Activated T-helper 2 cell treated with anti-CD3 and anti-CD28 coated beads, Interferon-gamma antibody, Interleukin-2, Interleukin-4, amounts not matched to agents 10 μg/mL and 5 μg/mL and 100 μg/mL, durations not matched to agents 14 hours and 24 hours and 36 hours (primary cell): ENCODE measurements at regions of chr5 and their contacts with region 1.

Region 1: DNA sequence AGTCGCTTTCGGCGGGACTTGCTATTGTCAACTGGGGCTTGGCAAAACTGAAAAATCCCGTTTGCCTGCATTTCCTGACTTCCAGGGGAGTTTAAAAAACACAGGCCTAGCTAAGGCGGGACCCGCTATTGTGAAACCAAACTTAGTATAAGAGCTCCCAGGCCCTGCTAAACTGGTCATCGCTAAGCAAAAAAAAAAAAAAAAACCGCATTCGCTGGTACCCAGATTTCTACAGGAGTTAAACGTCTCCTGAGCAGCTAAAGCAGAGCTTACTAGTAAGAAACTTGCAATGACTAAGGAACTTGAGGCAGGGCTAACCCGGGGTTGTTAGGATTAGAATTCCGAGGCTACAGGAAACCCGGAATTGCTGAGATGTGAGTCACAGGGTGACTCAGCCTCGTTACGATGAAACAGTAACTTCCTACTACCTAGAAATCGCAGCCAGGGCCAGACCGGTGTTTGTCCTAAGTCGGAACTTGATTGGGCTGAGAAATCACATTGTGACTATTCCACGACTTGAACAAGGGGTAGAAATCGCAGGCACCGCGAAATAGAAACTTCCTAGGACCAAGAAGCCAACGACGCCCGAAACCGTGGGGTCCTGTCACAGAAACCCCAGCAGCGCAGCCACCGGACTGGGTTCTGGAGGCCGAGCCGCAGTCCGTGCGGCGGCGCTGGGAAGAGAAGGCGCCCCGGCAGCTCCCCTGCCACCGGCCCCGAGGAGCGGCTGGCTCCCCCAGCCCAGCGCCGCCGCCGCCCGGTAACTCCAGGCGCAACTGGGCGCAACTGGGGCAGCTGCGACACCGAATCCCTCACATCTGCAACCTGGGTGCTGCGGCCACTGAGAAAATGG is 89.5 kb downstream of the ANXA2R start:
- DNase-seq: peak; percentile 61
- H3K4me3 Mint-ChIP-seq: peak overlapping the region; percentile 92
- H3K27ac Mint-ChIP-seq: peak overlapping the region; percentile 99
- H3K4me1 Mint-ChIP-seq: peaks cover 24% of the 10 kb centered on the region
- H3K27me3 Mint-ChIP-seq: peaks cover 2% of the 10 kb centered on the region

Region 2: GRCh38 chr5:42756606-42757601 is 193.8 kb before region 1 on chr5 and contains the start of gene CCDC152:
- intact Hi-C with region 1: loop called (anchors 2 kb)
- DNase-seq: peak; percentile 32
- H3K4me3 Mint-ChIP-seq: peak within 1 kb of the TSS; percentile 81
- H3K27ac Mint-ChIP-seq: peak within 1 kb of the TSS; percentile 31
- H3K4me1 Mint-ChIP-seq: peaks cover 16% of the 10 kb centered on the region
- H3K27me3 Mint-ChIP-seq: peaks cover 14% of the 10 kb centered on the region
- total RNA-seq, gene CCDC152: 5.5 and 6.0 TPM in 2 replicates

Region 3: GRCh38 chr5:42994246-42995151 is 43.8 kb after region 1 on chr5:
- intact Hi-C with region 1: loop called (anchors 1 kb)
- DNase-seq: peak; percentile 86
- H3K4me3 Mint-ChIP-seq: peak overlapping the region; percentile 100
- H3K27ac Mint-ChIP-seq: peak overlapping the region; percentile 100
- H3K4me1 Mint-ChIP-seq: peaks cover 32% of the 10 kb centered on the region
- H3K27me3 Mint-ChIP-seq: no peaks in the 10 kb centered on the region

Region 4: DNA sequence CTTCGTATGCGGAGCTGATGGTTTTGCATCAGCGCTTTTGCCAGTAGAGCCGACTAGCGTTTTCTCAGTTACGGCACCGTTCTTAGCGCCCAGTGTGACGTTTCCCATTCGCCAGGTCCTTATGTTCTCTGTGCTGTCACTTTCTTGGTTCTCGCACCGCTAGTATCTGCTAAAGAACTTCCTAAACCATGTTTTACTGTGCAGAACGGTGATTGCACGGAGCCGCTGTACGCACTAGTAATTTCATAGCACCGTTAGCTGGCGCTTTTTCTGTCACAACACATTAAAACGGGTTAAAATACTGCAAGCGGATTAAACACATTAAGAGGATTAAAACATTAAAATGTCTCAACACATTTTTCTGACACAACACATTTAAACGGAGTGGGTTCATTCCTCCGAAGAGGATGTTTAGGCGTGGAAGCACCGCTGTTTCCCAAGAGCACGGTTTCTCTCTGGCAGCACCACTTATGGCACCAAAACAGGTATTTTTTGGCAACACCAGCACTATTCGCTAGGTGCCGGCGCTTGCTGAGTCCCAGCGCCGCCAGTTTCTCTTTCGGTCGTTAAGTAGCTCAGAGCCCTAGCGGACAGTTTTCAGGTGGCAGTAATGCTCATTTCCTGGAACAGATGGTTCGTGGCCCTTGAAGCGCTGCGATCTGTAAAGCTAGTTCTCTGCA is 69.1 kb after region 1 on chr5:
- intact Hi-C with region 1: loop called (anchors 1 kb)
- DNase-seq: peak; percentile 84
- H3K4me3 Mint-ChIP-seq: peak overlapping the region; percentile 96
- H3K27ac Mint-ChIP-seq: peak overlapping the region; percentile 99
- H3K4me1 Mint-ChIP-seq: peaks cover 38% of the 10 kb centered on the region
- H3K27me3 Mint-ChIP-seq: no peaks in the 10 kb centered on the region

Region 5: GRCh38 chr5:43066799-43067741 is 116.4 kb after region 1 on chr5:
- intact Hi-C with region 1: loop called (anchors 1 kb)
- DNase-seq: peak; percentile 85
- H3K4me3 Mint-ChIP-seq: peak overlapping the region; percentile 91
- H3K27ac Mint-ChIP-seq: peak overlapping the region; percentile 97
- H3K4me1 Mint-ChIP-seq: peaks cover 32% of the 10 kb centered on the region
- H3K27me3 Mint-ChIP-seq: no peaks in the 10 kb centered on the region

Region 6: GRCh38 chr5:43602461-43603343 is 652.0 kb after region 1 on chr5 and contains the start of gene NNT:
- intact Hi-C with region 1: loop called (anchors 2 kb)
- DNase-seq: peak; percentile 75
- H3K4me3 Mint-ChIP-seq: peak within 1 kb of the TSS; percentile 87
- H3K27ac Mint-ChIP-seq: peak within 1 kb of the TSS; percentile 82
- H3K4me1 Mint-ChIP-seq: peaks cover 23% of the 10 kb centered on the region
- H3K27me3 Mint-ChIP-seq: no peaks in the 10 kb centered on the region
- total RNA-seq, gene NNT: 64.1 and 64.8 TPM in 2 replicates